ENCODE measurements at regions of chr3 and their contacts with region 1.

Region 1: DNA sequence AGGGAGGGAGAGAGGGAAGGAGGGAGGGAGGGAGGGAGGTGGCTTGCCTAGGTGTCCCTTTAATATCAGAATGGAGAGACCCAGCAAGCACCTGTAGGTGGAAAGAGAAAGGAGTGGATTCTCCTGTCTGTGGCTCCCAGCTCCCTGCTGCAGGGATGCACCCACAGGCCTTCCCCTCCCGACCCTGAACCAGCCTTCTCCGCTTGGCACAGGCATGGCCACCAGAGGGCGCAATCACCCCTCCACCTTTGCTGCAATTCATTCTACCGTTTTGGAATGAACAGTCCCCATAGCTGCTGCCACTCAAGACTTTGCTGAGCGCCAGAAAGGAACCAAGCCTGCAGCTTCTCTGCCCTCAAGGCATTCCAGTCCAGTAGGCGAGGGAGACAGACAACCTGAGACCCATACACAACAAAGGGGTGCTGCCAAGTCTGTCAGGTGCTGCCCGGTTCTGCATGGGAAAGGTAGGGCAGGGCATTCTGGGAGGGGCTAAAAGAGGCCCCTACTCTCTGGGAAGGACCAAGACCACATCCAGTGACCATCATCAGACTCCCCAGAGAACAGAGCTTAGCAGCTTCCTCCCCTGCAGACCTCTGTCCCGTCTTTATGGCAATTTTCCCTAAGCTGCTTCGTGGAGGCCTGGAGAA is 4.9 kb downstream of the TLR9 start:
- DNase-seq: peak; percentile 94
- H3K4me3 Mint-ChIP-seq: no peak overlapping the region
- H3K27ac Mint-ChIP-seq: peak overlapping the region; percentile 49
- H3K4me1 Mint-ChIP-seq: peaks cover 83% of the 10 kb centered on the region
- H3K27me3 Mint-ChIP-seq: no peaks in the 10 kb centered on the region

Region 2: GRCh38 chr3:52108302-52109232 is 111.9 kb before region 1 on chr3:
- CTCF ChIA-PET with region 1: no interaction called
- POLR2A ChIA-PET with region 1: no interaction called
- intact Hi-C with region 1: no loop called
- DNase-seq: no peak
- H3K4me3 Mint-ChIP-seq: no peak overlapping the region
- H3K27ac Mint-ChIP-seq: no peak overlapping the region
- H3K4me1 Mint-ChIP-seq: no peaks in the 10 kb centered on the region
- H3K27me3 Mint-ChIP-seq: no peaks in the 10 kb centered on the region

Region 3: GRCh38 chr3:52154117-52155094 is 66.1 kb before region 1 on chr3 and contains the start of gene POC1A:
- CTCF ChIA-PET with region 1: interaction called, 3 read pairs
- POLR2A ChIA-PET with region 1: no interaction called
- intact Hi-C with region 1: loop called (anchors 5 kb)
- DNase-seq: peak; percentile 94
- H3K4me3 Mint-ChIP-seq: peak within 1 kb of the TSS; percentile 88
- H3K27ac Mint-ChIP-seq: peak within 1 kb of the TSS; percentile 89
- H3K4me1 Mint-ChIP-seq: peaks cover 20% of the 10 kb centered on the region
- H3K27me3 Mint-ChIP-seq: no peaks in the 10 kb centered on the region
- total RNA-seq, gene POC1A: 28.5 to 30.5 TPM

Region 4: GRCh38 chr3:52204337-52205073 is 16.0 kb before region 1 on chr3:
- CTCF ChIA-PET with region 1: interaction called, 76 read pairs
- POLR2A ChIA-PET with region 1: interaction called, 4 read pairs
- intact Hi-C with region 1: no loop called
- DNase-seq: peak; percentile 62
- H3K4me3 Mint-ChIP-seq: no peak overlapping the region
- H3K27ac Mint-ChIP-seq: peak overlapping the region; percentile 46
- H3K4me1 Mint-ChIP-seq: peaks cover 46% of the 10 kb centered on the region
- H3K27me3 Mint-ChIP-seq: no peaks in the 10 kb centered on the region

Region 5: DNA sequence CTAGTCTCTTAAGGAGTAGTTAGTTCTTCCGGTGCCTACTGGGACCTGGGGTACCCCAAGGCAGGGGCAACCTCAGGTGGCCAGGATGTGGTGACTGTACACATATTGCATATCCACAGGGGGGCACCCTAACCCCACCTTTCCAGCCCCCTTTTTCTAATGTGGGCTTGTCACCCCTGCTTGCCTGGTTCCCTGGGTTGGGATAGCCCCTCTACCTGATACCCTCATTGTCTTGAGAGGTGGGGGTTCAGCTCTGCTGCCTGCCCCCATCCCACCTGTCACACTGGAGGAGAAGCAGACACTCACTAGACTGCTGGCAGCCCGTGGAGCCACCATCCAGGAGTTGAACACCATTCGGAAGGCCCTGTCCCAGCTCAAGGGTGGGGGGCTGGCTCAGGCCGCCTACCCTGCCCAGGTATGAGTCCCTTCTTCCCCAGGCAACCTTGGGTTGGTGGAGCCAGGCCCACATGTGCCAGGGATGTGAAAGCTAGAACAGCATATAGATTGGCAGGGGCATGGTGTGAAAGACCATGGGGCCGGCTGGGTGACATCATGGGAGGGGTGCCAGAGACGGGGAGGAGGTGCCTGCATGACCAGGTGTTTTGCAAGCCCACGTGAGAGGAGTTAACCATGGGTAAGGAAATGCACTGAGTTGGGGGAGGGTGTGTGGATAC is 71.1 kb after region 1 on chr3:
- CTCF ChIA-PET with region 1: interaction called, 13 read pairs
- POLR2A ChIA-PET with region 1: no interaction called
- intact Hi-C with region 1: no loop called
- DNase-seq: peak; percentile 57
- H3K4me3 Mint-ChIP-seq: no peak overlapping the region
- H3K27ac Mint-ChIP-seq: no peak overlapping the region
- H3K4me1 Mint-ChIP-seq: peaks cover 17% of the 10 kb centered on the region
- H3K27me3 Mint-ChIP-seq: no peaks in the 10 kb centered on the region

Region 6: DNA sequence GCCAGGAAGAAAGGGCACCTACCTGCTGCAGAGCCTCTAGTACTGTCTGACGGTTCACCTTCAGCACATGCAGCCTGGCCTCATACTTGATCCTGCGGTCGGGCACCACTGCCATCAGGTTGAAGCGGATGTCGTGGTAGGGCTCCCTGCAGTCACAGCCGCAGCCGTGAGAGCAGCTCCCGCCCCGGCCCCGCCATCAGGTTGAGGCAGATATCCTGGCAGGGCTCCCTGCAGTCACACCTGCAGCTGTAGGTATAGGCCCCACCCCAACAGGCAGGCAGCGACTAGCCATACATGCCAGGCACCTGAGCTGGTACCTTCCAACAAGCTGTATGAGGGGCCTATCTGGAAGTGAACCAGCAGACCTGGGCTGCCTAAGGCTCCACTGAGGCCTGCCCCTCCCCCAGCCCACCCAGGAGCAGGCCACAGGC is 185.7 kb after region 1 on chr3:
- CTCF ChIA-PET with region 1: no interaction called
- POLR2A ChIA-PET with region 1: no interaction called
- intact Hi-C with region 1: no loop called
- DNase-seq: no peak
- H3K4me3 Mint-ChIP-seq: no peak overlapping the region
- H3K27ac Mint-ChIP-seq: no peak overlapping the region
- H3K4me1 Mint-ChIP-seq: peaks cover 16% of the 10 kb centered on the region
- H3K27me3 Mint-ChIP-seq: no peaks in the 10 kb centered on the region

Region 7: GRCh38 chr3:52570076-52570475 is 349.6 kb after region 1 on chr3:
- CTCF ChIA-PET with region 1: no interaction called
- POLR2A ChIA-PET with region 1: no interaction called
- intact Hi-C with region 1: no loop called
- DNase-seq: no peak
- H3K4me3 Mint-ChIP-seq: no peak overlapping the region
- H3K27ac Mint-ChIP-seq: no peak overlapping the region
- H3K4me1 Mint-ChIP-seq: no peaks in the 10 kb centered on the region
- H3K27me3 Mint-ChIP-seq: no peaks in the 10 kb centered on the region